Spleen (tissue), 13 donors: ENCODE measurements at regions of chr3 and their contacts with region 1.

Region 1: GRCh38 chr3:158434412-158435038 is 136.5 kb upstream of the MLF1 start:
- DNase-seq: no peak
- H3K4me3 ChIP-seq: no peak overlapping the region
- H3K27ac ChIP-seq: no peak overlapping the region
- H3K4me1 ChIP-seq: no peaks in the 10 kb centered on the region
- H3K27me3 ChIP-seq: no peaks in the 10 kb centered on the region
- CTCF ChIP-seq: peak in 8 of 11 experiments; percentile 37 to 66 (median 54)
- POLR2A ChIP-seq: no peak

Region 2: DNA sequence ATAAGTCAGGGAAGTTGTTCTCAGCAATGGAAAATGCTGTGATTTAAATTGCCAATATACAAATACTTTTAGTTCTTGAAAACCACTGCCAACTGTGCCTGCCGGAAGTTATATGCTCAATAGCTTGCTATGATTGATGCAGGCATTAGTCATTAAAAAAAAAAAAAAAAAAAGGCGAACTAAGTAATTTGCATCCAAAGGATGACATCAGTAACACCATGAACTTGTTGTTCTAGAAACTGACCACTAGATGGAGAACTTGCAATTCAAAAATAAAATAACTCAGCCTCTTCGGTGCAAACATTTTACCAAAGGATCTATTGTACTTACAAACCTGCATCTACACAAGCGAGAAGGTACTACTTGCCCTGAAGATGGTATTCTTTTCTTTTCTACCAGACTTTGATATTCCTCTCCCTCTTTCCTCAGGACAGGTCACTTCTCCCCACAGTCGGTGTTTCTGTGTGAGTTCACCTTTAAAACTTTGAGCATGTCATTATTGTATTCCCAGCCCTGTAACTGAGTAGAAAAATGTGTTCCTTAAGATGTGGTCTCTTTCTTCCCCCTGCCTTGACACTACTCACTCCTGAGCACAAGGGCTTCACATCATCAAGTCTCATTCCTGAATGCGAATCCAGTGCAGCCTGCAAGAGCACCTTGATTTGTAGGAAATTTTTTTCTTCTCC is 816.3 kb before region 1 on chr3:
- intact Hi-C with region 1: loop called (anchors 5 kb)
- DNase-seq: no peak
- H3K4me3 ChIP-seq: no peak overlapping the region
- H3K27ac ChIP-seq: no peak overlapping the region
- H3K4me1 ChIP-seq: peaks cover 0 to 9% (median 6%) of the 10 kb centered on the region in 6 donors
- H3K27me3 ChIP-seq: peaks cover 0 to 18% (median 0%) of the 10 kb centered on the region in 7 donors
- CTCF ChIP-seq: peak; percentile 23 to 77 (median 66)
- POLR2A ChIP-seq: no peak

Region 3: GRCh38 chr3:158479051-158479450 is 44.5 kb after region 1 on chr3:
- intact Hi-C with region 1: no loop called
- DNase-seq: no peak
- H3K4me3 ChIP-seq: no peak overlapping the region
- H3K27ac ChIP-seq: no peak overlapping the region
- H3K4me1 ChIP-seq: no peaks in the 10 kb centered on the region
- H3K27me3 ChIP-seq: no peaks in the 10 kb centered on the region
- CTCF ChIP-seq: no peak
- POLR2A ChIP-seq: no peak